ENCODE measurements at regions of chr2 and their contacts with region 1.

Region 1: GRCh38 chr2:175439416-175439815 is 257.9 kb upstream of the ATP5MC3 start:
- DNase-seq: no peak
- H3K4me3 ChIP-seq: no peak overlapping the region
- H3K27ac ChIP-seq: no peak overlapping the region
- H3K27me3 ChIP-seq: peaks cover 0 to 33% (median 4%) of the 10 kb centered on the region in 45 donors
- CTCF ChIP-seq: no peak

Region 2: GRCh38 chr2:175227393-175227792 is 212.0 kb before region 1 on chr2:
- intact Hi-C with region 1: no loop called
- DNase-seq: no peak
- H3K4me3 ChIP-seq: no peak overlapping the region
- H3K27ac ChIP-seq: no peak overlapping the region
- H3K27me3 ChIP-seq: peaks cover 0 to 36% (median 5%) of the 10 kb centered on the region in 45 donors
- CTCF ChIP-seq: no peak

Region 3: GRCh38 chr2:175366815-175367214 is 72.6 kb before region 1 on chr2:
- intact Hi-C with region 1: no loop called
- DNase-seq: peak in 2 of 10 donors; percentile 15 to 35
- H3K4me3 ChIP-seq: no peak overlapping the region
- H3K27ac ChIP-seq: no peak overlapping the region
- H3K27me3 ChIP-seq: peaks cover 0 to 85% (median 45%) of the 10 kb centered on the region in 45 donors
- CTCF ChIP-seq: peak; percentile 31 to 82 (median 66)

Region 4: GRCh38 chr2:175450029-175450760 is 10.8 kb after region 1 on chr2:
- intact Hi-C with region 1: loop called in 1 of 2 experiments (anchors 1 kb)
- DNase-seq: no peak
- H3K4me3 ChIP-seq: no peak overlapping the region
- H3K27ac ChIP-seq: no peak overlapping the region
- H3K27me3 ChIP-seq: peaks cover 0 to 29% (median 2%) of the 10 kb centered on the region in 45 donors
- CTCF ChIP-seq: no peak

Measured in dorsolateral prefrontal cortex (tissue), 120 donors.